ENCODE measurements at regions of chr2 and their contacts with region 1.

Region 1: DNA sequence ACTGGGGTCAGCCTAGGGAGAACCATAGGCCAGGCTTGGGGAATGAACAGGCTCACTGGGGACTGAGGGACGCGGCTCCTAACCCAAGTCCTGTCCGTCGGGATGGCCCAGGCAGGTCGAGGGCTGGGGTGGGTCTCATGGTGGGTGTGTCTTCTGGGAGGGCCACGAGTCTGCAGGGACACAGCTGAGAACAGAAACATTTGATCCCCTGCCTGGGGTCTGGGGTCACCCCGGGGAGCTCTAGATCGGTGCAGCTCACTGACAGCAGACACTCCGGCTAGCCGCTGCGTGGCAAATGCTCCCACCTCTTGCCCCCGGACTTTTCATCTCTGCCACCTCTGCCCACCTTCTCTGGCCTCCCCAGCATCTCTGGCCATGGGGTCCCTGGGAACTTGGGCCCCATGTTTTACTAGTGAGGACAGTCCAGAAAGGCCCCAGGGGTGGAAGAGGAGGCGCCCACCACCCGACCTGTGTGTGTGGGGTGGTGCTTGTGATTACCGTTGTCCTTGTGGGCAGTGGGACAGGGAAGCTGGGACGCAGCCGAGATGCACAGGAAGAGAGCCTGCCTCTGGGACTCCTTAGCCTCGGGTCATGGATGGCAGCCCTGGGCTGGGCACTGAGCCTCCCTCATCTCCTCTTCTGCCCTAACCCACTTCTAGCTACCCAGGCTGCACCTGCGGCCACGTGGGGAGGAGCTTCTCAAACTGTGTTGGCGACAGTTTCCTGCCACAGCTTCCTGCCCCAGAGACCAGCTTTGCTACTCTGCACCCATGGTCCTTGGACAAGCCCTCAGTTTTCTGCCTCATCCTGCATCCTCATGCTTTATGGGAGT is 4.9 kb downstream of the ZAP70 start:
- DNase-seq: peak; percentile 57 to 89 (median 74)
- ATAC-seq: peak; percentile 88
- H3K4me3 ChIP-seq: peak overlapping the region; percentile 76
- H3K4me3 Mint-ChIP-seq: peak overlapping the region; percentile 89
- H3K27ac ChIP-seq: peak overlapping the region; percentile 75 to 88
- H3K27ac Mint-ChIP-seq: peak overlapping the region; percentile 98
- H3K4me1 ChIP-seq: peaks cover 95% of the 10 kb centered on the region
- H3K4me1 Mint-ChIP-seq: peaks cover 92% of the 10 kb centered on the region
- H3K27me3 ChIP-seq: no peaks in the 10 kb centered on the region
- H3K27me3 Mint-ChIP-seq: no peaks in the 10 kb centered on the region
- CTCF ChIP-seq: no peak

Region 2: GRCh38 chr2:97663965-97664635 is 54.2 kb before region 1 on chr2 and contains the start of gene ACTR1B:
- CTCF ChIA-PET with region 1: interaction called, 3 read pairs
- POLR2A ChIA-PET with region 1: interaction called, 18 read pairs
- intact Hi-C with region 1: loop called in 1 of 2 experiments (anchors 5 kb)
- DNase-seq: peak; percentile 94 to 99 (median 96)
- ATAC-seq: peak; percentile 86
- H3K4me3 ChIP-seq: peak within 1 kb of the TSS; percentile 96
- H3K4me3 Mint-ChIP-seq: peak within 1 kb of the TSS; percentile 100
- H3K27ac ChIP-seq: peak within 1 kb of the TSS; percentile 93 to 98
- H3K27ac Mint-ChIP-seq: peak within 1 kb of the TSS; percentile 99
- H3K4me1 ChIP-seq: peaks cover 34% of the 10 kb centered on the region
- H3K4me1 Mint-ChIP-seq: peaks cover 31% of the 10 kb centered on the region
- H3K27me3 ChIP-seq: no peaks in the 10 kb centered on the region
- H3K27me3 Mint-ChIP-seq: no peaks in the 10 kb centered on the region
- CTCF ChIP-seq: peak; percentile 66
- total RNA-seq, gene ACTR1B: 89.5 to 92.8 TPM

Region 3: GRCh38 chr2:97675430-97676113 is 42.7 kb before region 1 on chr2:
- CTCF ChIA-PET with region 1: no interaction called
- POLR2A ChIA-PET with region 1: no interaction called
- intact Hi-C with region 1: no loop called
- DNase-seq: no peak
- ATAC-seq: no peak
- H3K4me3 ChIP-seq: no peak overlapping the region
- H3K4me3 Mint-ChIP-seq: no peak overlapping the region
- H3K27ac ChIP-seq: no peak overlapping the region
- H3K27ac Mint-ChIP-seq: no peak overlapping the region
- H3K4me1 ChIP-seq: no peaks in the 10 kb centered on the region
- H3K4me1 Mint-ChIP-seq: no peaks in the 10 kb centered on the region
- H3K27me3 ChIP-seq: no peaks in the 10 kb centered on the region
- H3K27me3 Mint-ChIP-seq: no peaks in the 10 kb centered on the region
- CTCF ChIP-seq: no peak

Region 4: GRCh38 chr2:97740590-97741182 is 22.4 kb after region 1 on chr2:
- CTCF ChIA-PET with region 1: interaction called, 5 read pairs
- POLR2A ChIA-PET with region 1: interaction called, 42 read pairs
- intact Hi-C with region 1: no loop called
- DNase-seq: peak in 7 of 14 experiments; percentile 31 to 72 (median 48)
- ATAC-seq: peak; percentile 27
- H3K4me3 ChIP-seq: no peak overlapping the region
- H3K4me3 Mint-ChIP-seq: no peak overlapping the region
- H3K27ac ChIP-seq: no peak overlapping the region
- H3K27ac Mint-ChIP-seq: peak overlapping the region; percentile 79
- H3K4me1 ChIP-seq: peaks cover 59% of the 10 kb centered on the region
- H3K4me1 Mint-ChIP-seq: peaks cover 65% of the 10 kb centered on the region
- H3K27me3 ChIP-seq: no peaks in the 10 kb centered on the region
- H3K27me3 Mint-ChIP-seq: no peaks in the 10 kb centered on the region
- CTCF ChIP-seq: peak; percentile 65

Region 5: GRCh38 chr2:98308068-98308467 is 589.8 kb after region 1 on chr2:
- CTCF ChIA-PET with region 1: no interaction called
- POLR2A ChIA-PET with region 1: no interaction called
- intact Hi-C with region 1: no loop called
- DNase-seq: no peak
- ATAC-seq: no peak
- H3K4me3 ChIP-seq: no peak overlapping the region
- H3K4me3 Mint-ChIP-seq: no peak overlapping the region
- H3K27ac ChIP-seq: no peak overlapping the region
- H3K27ac Mint-ChIP-seq: no peak overlapping the region
- H3K4me1 ChIP-seq: no peaks in the 10 kb centered on the region
- H3K4me1 Mint-ChIP-seq: no peaks in the 10 kb centered on the region
- H3K27me3 ChIP-seq: peaks cover 6 to 13% of the 10 kb centered on the region in 2 experiments
- H3K27me3 Mint-ChIP-seq: peaks cover 74% of the 10 kb centered on the region
- CTCF ChIP-seq: no peak

Region 6: DNA sequence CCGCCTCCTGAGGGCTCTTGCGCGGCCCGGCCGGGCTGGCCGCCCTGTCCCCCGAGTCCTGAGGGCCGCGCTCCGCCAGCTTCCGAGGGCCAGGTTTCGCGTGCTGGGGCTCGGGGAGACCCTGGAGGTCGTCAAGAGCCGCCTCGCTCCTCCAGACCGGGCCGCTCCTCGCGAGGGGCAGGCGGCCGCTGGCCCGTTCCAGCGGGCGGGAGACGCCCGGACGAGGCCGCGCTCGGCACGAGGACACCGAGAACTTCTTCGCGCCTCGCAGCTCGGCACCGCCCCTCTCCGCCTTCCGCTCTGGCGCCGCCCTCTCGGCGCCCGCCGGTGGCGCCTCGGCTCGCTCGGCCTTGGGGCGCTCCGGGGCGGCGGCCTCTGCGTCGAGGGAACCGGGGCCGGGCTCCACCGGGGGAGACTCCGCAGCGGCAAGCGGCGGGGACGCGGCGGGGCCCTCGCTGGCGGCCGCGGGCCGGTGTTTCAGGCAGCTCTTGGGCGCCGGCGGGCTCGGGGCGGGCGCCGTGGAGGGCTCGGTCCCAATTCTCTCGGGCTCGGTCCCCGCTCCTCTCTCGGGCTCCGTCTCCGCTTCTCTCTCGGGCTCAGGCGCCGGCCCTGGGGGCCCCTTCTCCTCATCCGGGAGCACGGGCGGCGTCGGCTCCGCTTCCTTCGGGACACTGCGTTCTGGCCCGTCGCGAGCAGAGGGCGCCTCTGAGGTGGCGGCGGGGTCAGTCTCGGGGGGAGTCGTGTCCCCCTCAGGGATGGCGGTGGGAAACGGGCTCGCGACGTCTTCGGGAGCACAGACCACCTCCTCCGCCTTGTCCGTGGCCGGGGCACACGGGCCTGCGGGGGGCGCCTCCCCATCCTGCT is 1104.3 kb after region 1 on chr2:
- CTCF ChIA-PET with region 1: no interaction called
- POLR2A ChIA-PET with region 1: no interaction called
- intact Hi-C with region 1: loop called in 1 of 2 experiments (anchors 10 kb)
- DNase-seq: peak; percentile 33 to 87 (median 56)
- ATAC-seq: peak; percentile 91
- H3K4me3 ChIP-seq: peak overlapping the region; percentile 57
- H3K4me3 Mint-ChIP-seq: peak overlapping the region; percentile 62
- H3K27ac ChIP-seq: no peak overlapping the region
- H3K27ac Mint-ChIP-seq: no peak overlapping the region
- H3K4me1 ChIP-seq: peaks cover 29% of the 10 kb centered on the region
- H3K4me1 Mint-ChIP-seq: peaks cover 53% of the 10 kb centered on the region
- H3K27me3 ChIP-seq: no peaks in the 10 kb centered on the region
- H3K27me3 Mint-ChIP-seq: no peaks in the 10 kb centered on the region
- CTCF ChIP-seq: peak; percentile 43